SK-N-SH (cell line): ENCODE measurements at regions of chr11 and their contacts with region 1.

Region 1: GRCh38 chr11:72446902-72447769 is 12.8 kb upstream of the CLPB start:
- DNase-seq: peak; percentile 72
- H3K4me3 ChIP-seq: no peak overlapping the region; a peak in 1 of 4 replicates
- H3K27ac ChIP-seq: no peak overlapping the region
- H3K4me1 ChIP-seq: no peaks in the 10 kb centered on the region; a peak in 1 of 4 replicates
- H3K27me3 ChIP-seq: no peaks in the 10 kb centered on the region; the same call in 1 of the 2 replicates
- CTCF ChIP-seq: peak; percentile 87
- EP300 ChIP-seq: no peak
- RAD21 ChIP-seq: peak; percentile 88

Region 2: DNA sequence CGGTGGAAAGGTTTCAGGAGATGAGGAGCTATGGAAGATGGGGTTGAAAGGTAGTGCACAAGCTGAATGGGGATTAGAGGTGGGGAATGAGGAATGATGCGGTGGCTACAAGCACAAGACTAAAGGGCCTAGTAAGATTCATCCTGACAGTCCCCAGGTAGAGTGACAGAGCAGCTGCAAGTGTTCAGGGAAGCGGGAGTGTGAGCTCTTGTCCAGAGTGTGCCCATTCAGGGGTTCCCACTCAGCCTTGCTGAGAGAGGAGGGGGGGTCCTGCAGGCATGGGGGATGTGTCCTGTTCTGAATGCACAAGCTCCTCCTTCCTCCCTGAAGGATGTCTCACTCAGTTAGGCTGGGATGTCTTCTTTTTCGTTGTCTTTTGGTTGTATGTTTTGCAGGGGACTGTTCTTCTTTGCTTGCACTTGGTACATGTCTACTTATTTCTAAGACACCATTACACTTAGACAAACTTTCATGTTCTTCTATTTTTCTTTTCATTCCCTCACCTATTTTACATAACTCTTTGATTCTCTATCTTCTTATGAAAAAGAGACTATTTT is 13.0 kb after region 1 on chr11:
- CTCF ChIA-PET with region 1: interaction called, 23 read pairs
- POLR2A ChIA-PET with region 1: no interaction called
- DNase-seq: no peak
- H3K4me3 ChIP-seq: no peak overlapping the region
- H3K27ac ChIP-seq: no peak overlapping the region
- H3K4me1 ChIP-seq: no peaks in the 10 kb centered on the region
- H3K27me3 ChIP-seq: peaks cover 18% of the 10 kb centered on the region; the same call in 1 of the 2 replicates
- CTCF ChIP-seq: no peak
- EP300 ChIP-seq: no peak
- RAD21 ChIP-seq: no peak